GM13977 (cell line): ENCODE measurements at regions of chr20 and their contacts with region 1.

Region 1: GRCh38 chr20:37564388-37565133 is 36.9 kb upstream of the BLCAP start:
- DNase-seq: peak; percentile 81
- CTCF ChIP-seq: peak; percentile 97

Region 2: DNA sequence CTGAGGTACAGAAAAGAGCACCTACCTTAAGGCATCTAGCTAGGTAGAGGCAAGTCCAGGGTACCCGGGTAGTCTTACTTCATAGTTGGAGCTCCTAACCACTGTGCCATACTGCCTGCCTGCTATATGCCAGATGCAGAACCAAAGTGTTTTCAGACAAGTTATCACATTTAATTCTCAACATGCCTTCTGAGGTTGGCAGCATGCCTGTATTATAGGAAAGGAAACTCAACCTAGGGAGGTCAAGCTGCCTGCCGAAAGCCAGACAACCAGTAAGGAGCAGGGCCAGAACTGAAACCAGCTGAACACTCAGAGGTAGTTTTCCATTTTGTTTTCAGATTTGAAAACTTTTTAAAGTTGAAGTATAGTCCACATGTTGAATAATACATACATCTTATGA is 134.6 kb after region 1 on chr20:
- in situ Hi-C with region 1: no loop called
- DNase-seq: no peak
- CTCF ChIP-seq: no peak

Region 3: DNA sequence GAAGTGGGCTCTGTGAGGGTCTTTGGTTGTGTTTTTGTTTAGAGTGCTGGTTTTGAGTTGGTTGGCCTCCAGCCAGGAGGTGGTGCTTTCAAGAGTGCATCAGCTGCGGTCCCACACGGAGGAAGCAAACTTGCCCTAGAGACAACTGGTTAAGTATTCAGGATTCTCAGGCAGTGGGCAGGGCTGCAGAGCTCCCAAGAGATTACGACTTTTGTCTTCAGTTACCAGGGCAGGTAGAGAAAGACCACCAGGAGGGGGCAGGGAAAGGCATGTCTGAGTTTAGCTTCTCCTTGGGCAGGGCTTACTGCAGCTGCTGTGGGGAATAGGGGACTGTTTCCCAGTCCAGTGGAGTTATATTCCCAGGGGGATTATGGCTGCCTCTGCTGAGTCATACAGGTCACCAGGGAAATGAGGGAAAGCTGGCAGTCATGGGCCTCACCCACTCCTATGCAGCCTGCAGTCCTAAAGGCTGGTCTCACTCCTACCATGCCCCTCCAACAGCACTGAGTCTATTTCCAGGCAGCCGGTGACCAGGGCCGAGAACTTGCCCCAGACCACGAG is 404.4 kb after region 1 on chr20:
- in situ Hi-C with region 1: no loop called
- DNase-seq: no peak
- CTCF ChIP-seq: no peak

Region 4: GRCh38 chr20:37990571-37991151 is 426.1 kb after region 1 on chr20:
- in situ Hi-C with region 1: loop called (anchors 10 kb)
- DNase-seq: peak; percentile 88
- CTCF ChIP-seq: no peak

Region 5: DNA sequence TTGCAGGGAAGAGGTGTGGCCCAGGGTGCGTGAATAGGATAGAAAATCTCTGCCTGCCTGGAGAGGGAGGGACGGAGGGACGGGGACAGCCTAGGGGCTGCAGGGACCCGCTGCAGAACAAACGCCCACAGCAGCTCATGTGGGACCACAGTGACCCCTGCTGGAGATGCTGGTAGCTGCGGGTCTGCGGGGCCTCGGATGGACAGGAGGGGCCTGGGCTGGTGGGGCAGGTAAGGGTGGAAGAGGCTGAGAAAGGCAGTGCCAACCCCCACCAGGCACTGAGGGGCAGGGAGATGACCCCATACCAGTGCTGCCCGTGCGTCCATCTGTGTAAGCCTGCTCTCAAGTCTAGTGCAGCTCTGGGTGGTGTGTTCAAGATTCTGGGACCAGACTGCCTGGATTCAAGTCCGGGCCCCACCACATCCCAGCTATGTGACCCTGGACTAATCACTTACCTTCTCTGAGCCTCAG is 656.6 kb after region 1 on chr20:
- in situ Hi-C with region 1: loop called (anchors 25 kb)
- DNase-seq: peak; percentile 91
- CTCF ChIP-seq: peak; percentile 94